Thyroid gland (tissue), 4 donors: ENCODE measurements at regions of chr11 and their contacts with region 1.

Region 1: DNA sequence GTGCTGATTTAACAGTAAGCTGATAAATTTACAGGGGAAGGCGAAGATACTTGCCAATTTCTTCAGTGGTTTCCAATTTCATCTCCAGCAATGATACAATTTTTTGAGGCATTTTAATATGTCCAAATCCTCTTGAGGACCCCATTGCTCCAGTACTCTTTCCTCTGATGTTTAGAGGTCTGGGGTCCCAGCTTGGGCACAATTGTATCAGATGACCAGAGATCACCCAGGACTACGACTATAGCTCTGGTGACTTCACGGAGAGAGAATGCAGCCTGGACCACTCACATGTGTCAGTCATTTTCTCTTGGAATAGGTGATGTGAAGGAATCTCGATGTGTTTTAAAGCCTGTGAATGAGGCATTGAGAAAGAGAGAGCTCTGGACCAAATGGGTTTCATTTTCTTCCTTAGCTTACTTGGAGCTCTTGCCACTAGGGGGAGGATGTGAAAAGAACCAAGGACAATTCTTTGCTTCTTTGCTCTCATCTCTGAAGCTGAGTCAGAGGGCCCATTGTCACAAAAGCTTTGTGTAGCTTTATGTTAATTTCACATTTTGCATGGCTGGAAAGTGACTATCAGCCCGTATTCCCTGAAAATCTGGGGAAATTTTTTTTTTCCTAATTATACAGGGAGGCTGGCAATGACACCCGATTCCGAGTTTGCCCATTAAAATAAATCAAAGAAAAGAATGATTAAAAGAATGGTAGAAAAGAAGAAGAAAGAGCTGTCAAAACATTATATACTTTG is 6.7 kb upstream of the CCDC90B start:
- DNase-seq: peak; percentile 11 to 20
- H3K4me3 ChIP-seq: no peak overlapping the region
- H3K27ac ChIP-seq: no peak overlapping the region
- H3K4me1 ChIP-seq: no peaks in the 10 kb centered on the region
- H3K27me3 ChIP-seq: no peaks in the 10 kb centered on the region
- CTCF ChIP-seq: peak; percentile 54 to 83 (median 76)
- POLR2A ChIP-seq: no peak

Region 2: GRCh38 chr11:83736689-83737088 is 443.8 kb after region 1 on chr11:
- intact Hi-C with region 1: loop called (anchors 10 kb)
- DNase-seq: no peak
- H3K4me3 ChIP-seq: no peak overlapping the region
- H3K27ac ChIP-seq: no peak overlapping the region
- H3K4me1 ChIP-seq: no peaks in the 10 kb centered on the region
- H3K27me3 ChIP-seq: no peaks in the 10 kb centered on the region
- CTCF ChIP-seq: no peak
- POLR2A ChIP-seq: no peak